ENCODE measurements at regions of chr4 and their contacts with region 1.

Region 1: DNA sequence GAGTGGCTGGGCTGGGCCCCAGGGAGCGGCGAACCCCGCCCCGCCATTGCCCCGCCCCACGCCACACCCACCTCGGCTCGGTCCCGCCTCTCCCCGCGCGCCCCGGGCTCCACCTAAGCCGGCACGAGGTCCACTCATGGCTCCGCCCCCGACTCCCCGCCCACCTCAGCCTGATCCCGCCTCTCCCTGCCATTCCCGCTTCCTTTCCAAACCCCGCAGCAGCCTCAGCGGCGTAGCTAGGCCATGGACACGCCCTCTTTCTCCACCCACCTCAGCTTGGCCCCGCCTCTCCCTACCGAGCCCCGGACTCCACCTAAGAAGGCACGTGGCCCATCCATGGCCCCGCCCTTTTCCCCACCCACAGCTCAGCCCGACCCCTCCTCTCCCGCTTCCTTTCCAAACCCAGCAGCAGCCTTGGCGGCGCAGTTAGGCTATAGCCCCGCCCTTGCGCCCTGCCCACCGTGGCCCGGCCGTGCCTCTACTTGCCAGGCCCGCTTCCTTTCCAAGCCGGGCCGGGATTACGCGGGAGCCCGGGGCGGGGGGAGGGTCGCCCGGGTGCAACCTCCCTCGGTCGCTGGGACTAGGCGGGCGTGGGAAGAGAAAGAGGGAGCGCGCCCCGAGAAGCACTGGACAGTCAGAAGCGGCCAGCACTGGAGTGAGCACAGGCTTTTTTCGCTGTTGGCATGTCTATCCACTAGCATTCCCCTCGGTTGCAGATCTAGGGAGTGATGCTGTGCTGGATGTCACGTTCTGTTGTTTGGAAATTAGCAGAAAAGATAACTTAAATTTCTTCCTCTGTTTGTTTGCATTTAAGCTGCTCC is at the start of gene RELL1:
- DNase-seq: peak; percentile 96 to 99 (median 99)
- ATAC-seq: peak; percentile 92
- H3K4me3 ChIP-seq: peak within 1 kb of the TSS; percentile 50
- H3K4me3 Mint-ChIP-seq: peak within 1 kb of the TSS; percentile 92 to 98 (median 96)
- H3K27ac ChIP-seq: peak within 1 kb of the TSS; percentile 92
- H3K27ac Mint-ChIP-seq: peak within 1 kb of the TSS; percentile 88 to 99 (median 95)
- H3K4me1 ChIP-seq: peaks cover 22 to 30% of the 10 kb centered on the region in 2 donors
- H3K4me1 Mint-ChIP-seq: peaks cover 34 to 41% (median 39%) of the 10 kb centered on the region in 7 donors
- H3K27me3 ChIP-seq: no peaks in the 10 kb centered on the region
- H3K27me3 Mint-ChIP-seq: peaks cover 0 to 11% (median 0%) of the 10 kb centered on the region in 5 donors
- total RNA-seq, gene RELL1: 25.5 to 35.2 (median 28.2) TPM

Region 2: DNA sequence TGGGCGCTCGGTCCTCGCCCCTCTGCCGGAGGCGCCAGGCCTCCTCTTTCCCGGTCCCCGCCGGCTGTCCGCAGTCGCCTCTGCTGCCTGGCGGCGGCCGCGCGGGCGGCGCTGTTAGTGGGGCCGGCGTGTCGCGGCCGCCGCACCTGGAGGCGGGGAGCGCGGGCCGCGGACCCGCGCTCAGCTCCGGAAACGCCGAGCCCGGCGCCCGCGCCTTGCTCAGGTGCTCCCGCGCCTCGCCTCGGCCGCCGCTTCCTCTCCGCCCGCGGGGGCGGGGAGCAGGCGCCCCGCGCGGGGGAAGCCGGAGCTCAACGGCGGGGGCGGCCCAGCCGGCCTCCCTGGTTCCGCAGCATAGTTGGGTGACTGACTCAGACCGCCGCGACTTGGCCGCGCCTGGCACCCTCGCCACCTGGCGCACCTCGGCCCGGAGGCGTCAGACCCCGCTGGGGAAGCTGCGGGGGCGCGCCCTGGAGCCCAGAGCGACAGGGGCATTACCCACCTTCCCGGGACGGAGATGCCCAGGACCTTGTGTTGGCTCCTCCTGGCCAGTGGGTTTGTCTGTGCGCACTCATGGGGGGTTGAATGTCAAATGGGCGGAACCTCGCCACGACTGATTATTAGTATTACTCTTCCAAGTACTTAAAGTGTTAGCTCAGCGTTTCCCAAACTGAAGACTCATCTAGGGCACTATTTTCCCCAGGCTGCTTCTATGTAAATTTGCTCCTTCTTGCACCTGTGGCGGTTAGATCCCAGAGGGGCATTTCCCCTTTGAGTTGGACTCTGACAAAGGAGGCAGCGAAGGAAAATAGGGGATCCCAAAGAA is 1442.1 kb before region 1 on chr4 and contains the start of gene ARAP2:
- CTCF ChIA-PET with region 1: no interaction called
- POLR2A ChIA-PET with region 1: no interaction called
- intact Hi-C with region 1: loop called in 1 of 2 experiments (anchors 5 kb)
- DNase-seq: peak; percentile 61 to 84 (median 71)
- ATAC-seq: peak; percentile 84
- H3K4me3 ChIP-seq: peak within 1 kb of the TSS; percentile 67
- H3K4me3 Mint-ChIP-seq: peak within 1 kb of the TSS; percentile 82 to 97 (median 94)
- H3K27ac ChIP-seq: peak within 1 kb of the TSS; percentile 88
- H3K27ac Mint-ChIP-seq: peak within 1 kb of the TSS; percentile 89 to 96 (median 94)
- H3K4me1 ChIP-seq: peaks cover 7 to 23% of the 10 kb centered on the region in 2 donors
- H3K4me1 Mint-ChIP-seq: peaks cover 25 to 46% (median 36%) of the 10 kb centered on the region in 7 donors
- H3K27me3 ChIP-seq: no peaks in the 10 kb centered on the region
- H3K27me3 Mint-ChIP-seq: peaks cover 0 to 15% (median 0%) of the 10 kb centered on the region in 5 donors
- total RNA-seq, gene ARAP2: 39.7 to 78.5 (median 44.7) TPM

Region 3: DNA sequence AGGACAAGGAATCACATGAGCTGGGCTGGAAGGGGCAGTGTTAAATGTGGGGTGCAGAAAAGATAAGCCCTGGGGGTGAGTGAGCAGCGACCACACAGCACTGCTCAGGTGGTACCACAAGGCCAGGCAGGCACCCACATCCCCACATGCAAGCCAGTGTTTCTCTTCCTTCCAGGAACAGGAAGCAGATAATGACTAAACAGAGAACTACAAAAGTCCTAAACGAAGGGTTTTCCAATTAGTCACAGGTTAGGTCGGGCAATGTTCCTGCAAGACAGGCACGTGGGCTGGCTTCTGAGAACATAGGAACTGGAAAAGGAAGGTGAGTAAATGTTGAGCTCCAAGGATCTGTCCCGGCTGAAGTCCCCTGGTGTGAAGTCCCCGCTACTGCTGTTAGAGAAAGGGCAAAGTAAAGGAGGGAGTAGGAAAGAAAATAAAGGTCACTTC is 19.9 kb before region 1 on chr4:
- CTCF ChIA-PET with region 1: no interaction called
- POLR2A ChIA-PET with region 1: no interaction called
- intact Hi-C with region 1: loop called (anchors 2 kb)
- DNase-seq: no peak
- ATAC-seq: peak; percentile 34
- H3K4me3 ChIP-seq: no peak overlapping the region
- H3K4me3 Mint-ChIP-seq: peak overlapping the region in 7 of 10 donors; percentile 6 to 47 (median 24)
- H3K27ac ChIP-seq: no peak overlapping the region
- H3K27ac Mint-ChIP-seq: peak overlapping the region in 5 of 9 donors; percentile 1 to 42 (median 35)
- H3K4me1 ChIP-seq: peaks cover 17 to 22% of the 10 kb centered on the region in 2 donors
- H3K4me1 Mint-ChIP-seq: peaks cover 32 to 75% (median 69%) of the 10 kb centered on the region in 7 donors
- H3K27me3 ChIP-seq: no peaks in the 10 kb centered on the region
- H3K27me3 Mint-ChIP-seq: no peaks in the 10 kb centered on the region

Region 4: DNA sequence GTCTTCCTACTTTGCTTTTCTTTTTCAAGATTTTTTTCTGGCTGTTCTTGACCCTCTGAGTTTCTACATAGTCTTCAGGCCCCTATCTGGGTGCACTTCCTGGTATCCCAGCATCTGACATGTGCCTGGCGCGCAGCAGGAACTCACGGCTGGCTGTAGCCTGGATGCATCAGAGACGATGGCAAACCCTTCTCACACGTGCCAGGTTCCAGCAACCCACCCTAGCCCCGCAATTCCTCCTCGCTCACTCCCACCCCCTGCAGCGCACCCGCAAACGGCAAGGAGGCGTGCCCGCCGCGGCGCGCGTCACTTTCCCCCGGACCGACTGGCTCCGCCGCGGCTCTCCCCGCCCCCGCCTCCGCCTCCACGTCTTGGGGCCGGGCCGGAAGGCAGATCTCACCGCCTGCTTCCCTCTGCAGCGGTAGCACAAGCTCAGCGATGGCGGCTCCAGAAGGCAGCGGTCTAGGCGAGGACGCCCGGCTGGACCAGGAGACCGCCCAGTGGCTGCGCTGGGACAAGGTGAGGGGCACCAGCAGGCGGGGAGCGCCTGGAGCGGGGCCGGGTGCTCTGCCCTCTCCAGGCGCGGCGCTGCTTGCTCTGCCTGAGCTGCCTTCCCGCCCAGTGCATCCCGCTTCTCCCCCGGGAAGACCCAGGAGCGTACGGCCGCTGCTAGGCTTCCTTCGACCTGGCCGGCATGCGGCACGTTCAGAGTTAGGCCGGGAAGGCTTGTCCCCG is 139.9 kb after region 1 on chr4 and contains the start of gene PGM2:
- CTCF ChIA-PET with region 1: no interaction called
- POLR2A ChIA-PET with region 1: interaction called, 6 read pairs
- intact Hi-C with region 1: loop called (anchors 1 kb)
- DNase-seq: peak; percentile 84 to 94 (median 90)
- ATAC-seq: peak; percentile 99
- H3K4me3 ChIP-seq: peak within 1 kb of the TSS; percentile 79
- H3K4me3 Mint-ChIP-seq: peak within 1 kb of the TSS; percentile 93 to 100 (median 98)
- H3K27ac ChIP-seq: peak within 1 kb of the TSS; percentile 80
- H3K27ac Mint-ChIP-seq: peak within 1 kb of the TSS; percentile 92 to 99 (median 96)
- H3K4me1 ChIP-seq: peaks cover 7 to 11% of the 10 kb centered on the region in 2 donors
- H3K4me1 Mint-ChIP-seq: peaks cover 34 to 70% (median 55%) of the 10 kb centered on the region in 7 donors
- H3K27me3 ChIP-seq: no peaks in the 10 kb centered on the region
- H3K27me3 Mint-ChIP-seq: peaks cover 0 to 5% (median 0%) of the 10 kb centered on the region in 5 donors
- total RNA-seq, gene PGM2: 14.4 to 35.2 (median 18.7) TPM

Region 5: GRCh38 chr4:38310446-38311043 is 624.0 kb after region 1 on chr4:
- CTCF ChIA-PET with region 1: no interaction called
- POLR2A ChIA-PET with region 1: no interaction called
- intact Hi-C with region 1: loop called in 1 of 2 experiments (anchors 5 kb)
- DNase-seq: peak in 8 of 9 donors; percentile 70 to 84 (median 79)
- ATAC-seq: peak; percentile 96
- H3K4me3 ChIP-seq: peak overlapping the region; percentile 12
- H3K4me3 Mint-ChIP-seq: peak overlapping the region; percentile 37 to 80 (median 70)
- H3K27ac ChIP-seq: peak overlapping the region; percentile 44
- H3K27ac Mint-ChIP-seq: peak overlapping the region; percentile 65 to 96 (median 85)
- H3K4me1 ChIP-seq: peaks cover 29 to 34% of the 10 kb centered on the region in 2 donors
- H3K4me1 Mint-ChIP-seq: peaks cover 24 to 70% (median 60%) of the 10 kb centered on the region in 7 donors
- H3K27me3 ChIP-seq: no peaks in the 10 kb centered on the region
- H3K27me3 Mint-ChIP-seq: peaks cover 0 to 45% (median 0%) of the 10 kb centered on the region in 5 donors

Region 6: GRCh38 chr4:39181905-39182638 is 1495.5 kb after region 1 on chr4 and contains the start of gene WDR19:
- CTCF ChIA-PET with region 1: no interaction called
- POLR2A ChIA-PET with region 1: interaction called, 3 read pairs
- intact Hi-C with region 1: loop called (anchors 1 to 5 kb)
- DNase-seq: peak; percentile 91 to 98 (median 98)
- ATAC-seq: peak; percentile 98
- H3K4me3 ChIP-seq: peak within 1 kb of the TSS; percentile 91
- H3K4me3 Mint-ChIP-seq: no peak within 1 kb of the TSS
- H3K27ac ChIP-seq: peak within 1 kb of the TSS; percentile 72
- H3K27ac Mint-ChIP-seq: peak within 1 kb of the TSS in 4 of 9 donors; percentile 8 to 47 (median 21)
- H3K4me1 ChIP-seq: peaks cover 3 to 12% of the 10 kb centered on the region in 2 donors
- H3K4me1 Mint-ChIP-seq: peaks cover 0 to 12% (median 9%) of the 10 kb centered on the region in 7 donors
- H3K27me3 ChIP-seq: no peaks in the 10 kb centered on the region
- H3K27me3 Mint-ChIP-seq: peaks cover 0 to 16% (median 3%) of the 10 kb centered on the region in 5 donors
- total RNA-seq, gene WDR19: 14.0 to 44.3 (median 15.4) TPM

Region 7: GRCh38 chr4:39527273-39528060 is 1840.9 kb after region 1 on chr4 and contains the start of gene UGDH:
- CTCF ChIA-PET with region 1: no interaction called
- POLR2A ChIA-PET with region 1: no interaction called
- intact Hi-C with region 1: loop called in 1 of 2 experiments (anchors 1 kb)
- DNase-seq: peak; percentile 85 to 95 (median 88)
- ATAC-seq: peak; percentile 99
- H3K4me3 ChIP-seq: peak within 1 kb of the TSS; percentile 81
- H3K4me3 Mint-ChIP-seq: peak within 1 kb of the TSS; percentile 88 to 99 (median 98)
- H3K27ac ChIP-seq: peak within 1 kb of the TSS; percentile 74
- H3K27ac Mint-ChIP-seq: peak within 1 kb of the TSS; percentile 84 to 97 (median 93)
- H3K4me1 ChIP-seq: peaks cover 7 to 10% of the 10 kb centered on the region in 2 donors
- H3K4me1 Mint-ChIP-seq: peaks cover 11 to 26% (median 19%) of the 10 kb centered on the region in 7 donors
- H3K27me3 ChIP-seq: no peaks in the 10 kb centered on the region
- H3K27me3 Mint-ChIP-seq: no peaks in the 10 kb centered on the region
- total RNA-seq, gene UGDH: 6.9 to 20.9 (median 17.7) TPM

Measured in naive thymus-derived CD4-positive, alpha-beta T cell (primary cell).